ENCODE measurements at regions of chr4 and their contacts with region 1.

Region 1: DNA sequence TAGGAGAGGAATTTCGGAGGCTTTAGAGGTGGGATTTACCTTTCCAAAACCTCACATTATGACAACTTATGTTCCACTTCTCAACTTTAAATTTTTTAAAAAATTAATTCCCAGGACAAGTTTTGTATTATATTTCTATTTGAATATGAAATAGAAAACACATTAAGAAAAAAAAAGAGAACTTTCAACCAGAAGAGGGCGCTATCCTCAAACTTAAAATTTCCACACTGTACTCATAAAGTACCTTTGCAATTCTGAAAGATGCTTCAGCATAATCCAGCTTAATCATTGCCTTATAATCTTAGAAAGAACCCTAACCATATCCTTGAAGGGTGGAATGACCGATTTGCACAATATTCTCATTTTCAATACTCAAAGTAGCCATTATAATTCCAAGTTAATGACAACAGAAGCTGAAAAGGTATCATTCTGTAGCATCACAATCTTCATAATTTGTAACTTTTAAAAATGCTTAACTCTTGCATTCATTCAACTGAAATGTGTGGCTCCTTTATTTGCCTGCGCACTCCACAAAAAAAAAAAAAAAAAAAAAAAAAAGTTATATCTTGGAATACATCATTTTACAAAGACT is 158.0 kb downstream of the KCNIP4 start:
- DNase-seq: no peak
- H3K4me3 Mint-ChIP-seq: no peak overlapping the region
- H3K27ac Mint-ChIP-seq: no peak overlapping the region
- H3K4me1 Mint-ChIP-seq: no peaks in the 10 kb centered on the region
- H3K27me3 Mint-ChIP-seq: no peaks in the 10 kb centered on the region

Region 2: GRCh38 chr4:21802406-21802805 is 11.9 kb after region 1 on chr4:
- CTCF ChIA-PET with region 1: interaction called, 19 read pairs
- POLR2A ChIA-PET with region 1: no interaction called
- DNase-seq: no peak
- H3K4me3 Mint-ChIP-seq: no peak overlapping the region
- H3K27ac Mint-ChIP-seq: no peak overlapping the region
- H3K4me1 Mint-ChIP-seq: no peaks in the 10 kb centered on the region
- H3K27me3 Mint-ChIP-seq: no peaks in the 10 kb centered on the region

Region 3: GRCh38 chr4:22389240-22389870 is 598.8 kb after region 1 on chr4:
- CTCF ChIA-PET with region 1: interaction called, 75 read pairs
- POLR2A ChIA-PET with region 1: no interaction called
- DNase-seq: peak; percentile 18
- H3K4me3 Mint-ChIP-seq: no peak overlapping the region
- H3K27ac Mint-ChIP-seq: no peak overlapping the region
- H3K4me1 Mint-ChIP-seq: no peaks in the 10 kb centered on the region
- H3K27me3 Mint-ChIP-seq: no peaks in the 10 kb centered on the region

Measured in activated CD4-positive, alpha-beta memory T cell treated with anti-CD3 and anti-CD28 coated beads, Interleukin-2, amount 10 ng/mL, durations not matched to agents 7 days and 5 days (primary cell).